ENCODE measurements at regions of chr15 and their contacts with region 1.

Region 1: DNA sequence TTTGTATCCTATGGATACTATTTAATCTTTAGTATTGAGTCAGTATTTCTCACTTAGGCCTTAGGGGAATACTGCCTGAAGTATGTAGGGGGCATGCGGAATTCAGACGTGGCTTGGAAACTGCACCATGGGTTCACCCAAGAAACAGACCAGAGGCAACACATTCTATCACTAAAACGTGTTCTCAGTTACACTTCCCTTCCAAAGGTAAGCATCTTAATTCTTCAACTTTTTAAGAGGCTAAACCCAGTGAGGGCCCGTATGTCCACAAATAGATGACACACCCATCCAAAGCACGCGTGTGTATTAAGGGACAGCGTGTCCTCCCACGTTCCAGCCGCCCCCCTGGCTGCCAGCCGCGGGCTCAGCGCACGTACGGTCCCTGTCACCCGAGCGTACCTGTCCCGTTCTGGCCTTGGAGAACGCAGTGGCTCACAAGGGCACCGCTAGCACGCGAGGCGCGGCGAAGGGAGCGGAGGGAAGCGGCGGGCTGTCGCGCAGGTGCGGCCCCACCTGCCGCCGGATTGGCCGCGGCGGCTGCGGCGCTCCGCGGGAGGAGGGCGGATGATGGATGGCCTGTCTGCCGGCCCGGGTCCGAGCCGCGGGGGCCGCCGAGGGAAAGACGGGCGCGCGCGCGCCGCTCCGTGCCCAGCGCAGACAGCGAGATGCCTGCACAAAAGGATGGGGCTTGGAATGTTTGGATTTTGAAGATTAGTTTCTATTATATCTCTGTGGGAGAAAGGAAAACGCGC is 1003.9 kb upstream of the NR2F2 start:
- DNase-seq: peak in 1 of 14 experiments; percentile 6
- ATAC-seq: no peak
- H3K4me3 ChIP-seq: no peak overlapping the region
- H3K4me3 Mint-ChIP-seq: no peak overlapping the region
- H3K27ac ChIP-seq: no peak overlapping the region
- H3K27ac Mint-ChIP-seq: no peak overlapping the region
- H3K4me1 ChIP-seq: no peaks in the 10 kb centered on the region
- H3K4me1 Mint-ChIP-seq: peaks cover 8% of the 10 kb centered on the region
- H3K27me3 ChIP-seq: peaks cover 15 to 22% of the 10 kb centered on the region in 2 experiments
- H3K27me3 Mint-ChIP-seq: peaks cover 48% of the 10 kb centered on the region
- CTCF ChIP-seq: no peak

Region 2: GRCh38 chr15:95394186-95395067 is 67.8 kb after region 1 on chr15:
- CTCF ChIA-PET with region 1: no interaction called
- POLR2A ChIA-PET with region 1: no interaction called
- intact Hi-C with region 1: loop called in 1 of 2 experiments (anchors 5 kb)
- DNase-seq: no peak
- ATAC-seq: no peak
- H3K4me3 ChIP-seq: no peak overlapping the region
- H3K4me3 Mint-ChIP-seq: no peak overlapping the region
- H3K27ac ChIP-seq: no peak overlapping the region
- H3K27ac Mint-ChIP-seq: no peak overlapping the region
- H3K4me1 ChIP-seq: no peaks in the 10 kb centered on the region
- H3K4me1 Mint-ChIP-seq: no peaks in the 10 kb centered on the region
- H3K27me3 ChIP-seq: no peaks in the 10 kb centered on the region
- H3K27me3 Mint-ChIP-seq: peaks cover 13% of the 10 kb centered on the region
- CTCF ChIP-seq: no peak

Measured in CD4-positive, alpha-beta T cell (primary cell).